ENCODE measurements at regions of chr5 and their contacts with region 1.

Region 1: GRCh38 chr5:111278845-111279504 is 54.8 kb downstream of the CAMK4 start:
- DNase-seq: peak; percentile 77 to 94 (median 86)
- ATAC-seq: peak; percentile 99
- H3K4me3 ChIP-seq: no peak overlapping the region
- H3K4me3 Mint-ChIP-seq: no peak overlapping the region
- H3K27ac ChIP-seq: no peak overlapping the region
- H3K27ac Mint-ChIP-seq: peak overlapping the region; percentile 87
- H3K4me1 ChIP-seq: peaks cover 41% of the 10 kb centered on the region
- H3K4me1 Mint-ChIP-seq: peaks cover 79% of the 10 kb centered on the region
- H3K27me3 ChIP-seq: no peaks in the 10 kb centered on the region
- H3K27me3 Mint-ChIP-seq: no peaks in the 10 kb centered on the region
- CTCF ChIP-seq: peak; percentile 86

Region 2: DNA sequence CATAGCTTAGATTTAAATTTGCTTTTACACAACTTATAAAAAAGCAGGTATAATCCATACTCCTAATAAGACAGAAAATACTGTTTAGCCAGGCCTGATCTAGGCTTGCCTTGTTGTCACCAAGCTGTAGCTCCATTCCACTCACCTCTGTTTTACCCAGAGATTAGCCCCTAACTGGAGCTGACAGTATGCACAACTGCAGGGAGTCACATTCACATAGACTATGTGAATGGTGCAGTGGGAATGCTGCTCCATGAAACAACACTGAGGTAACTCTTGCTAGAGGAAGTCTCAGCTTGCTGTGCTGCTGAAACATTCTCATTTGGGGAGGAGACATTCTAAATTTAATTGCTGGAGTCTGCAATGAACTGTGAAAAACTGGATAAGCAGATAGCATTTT is 761.6 kb before region 1 on chr5:
- CTCF ChIA-PET with region 1: no interaction called
- POLR2A ChIA-PET with region 1: no interaction called
- intact Hi-C with region 1: no loop called
- DNase-seq: no peak
- ATAC-seq: no peak
- H3K4me3 ChIP-seq: no peak overlapping the region
- H3K4me3 Mint-ChIP-seq: no peak overlapping the region
- H3K27ac ChIP-seq: no peak overlapping the region
- H3K27ac Mint-ChIP-seq: no peak overlapping the region
- H3K4me1 ChIP-seq: no peaks in the 10 kb centered on the region
- H3K4me1 Mint-ChIP-seq: no peaks in the 10 kb centered on the region
- H3K27me3 ChIP-seq: no peaks in the 10 kb centered on the region
- H3K27me3 Mint-ChIP-seq: no peaks in the 10 kb centered on the region
- CTCF ChIP-seq: no peak

Region 3: DNA sequence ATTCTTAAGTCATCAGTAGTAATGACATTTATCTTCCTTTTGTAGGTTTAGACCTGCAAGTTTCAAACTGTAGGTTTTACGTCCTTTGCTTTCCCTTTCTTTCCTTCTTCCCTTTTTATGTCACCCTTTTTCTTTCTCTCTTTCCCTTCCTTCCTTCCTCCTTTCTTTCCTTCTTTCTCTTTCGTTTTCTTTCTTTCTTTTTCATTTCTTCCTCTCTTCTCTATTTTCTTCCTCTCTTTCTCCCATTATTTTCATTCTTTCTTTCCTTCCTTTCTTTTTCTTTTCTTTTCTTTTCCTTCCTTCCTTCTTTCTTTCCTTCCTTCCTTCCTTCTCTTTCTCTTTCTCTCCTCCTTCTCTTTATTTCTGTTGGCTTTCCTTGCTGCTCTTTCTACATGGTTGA is 127.0 kb before region 1 on chr5:
- CTCF ChIA-PET with region 1: interaction called, 203 read pairs
- POLR2A ChIA-PET with region 1: interaction called, 3 read pairs
- intact Hi-C with region 1: no loop called
- DNase-seq: no peak
- ATAC-seq: no peak
- H3K4me3 ChIP-seq: no peak overlapping the region
- H3K4me3 Mint-ChIP-seq: no peak overlapping the region
- H3K27ac ChIP-seq: no peak overlapping the region
- H3K27ac Mint-ChIP-seq: no peak overlapping the region
- H3K4me1 ChIP-seq: no peaks in the 10 kb centered on the region
- H3K4me1 Mint-ChIP-seq: no peaks in the 10 kb centered on the region
- H3K27me3 ChIP-seq: no peaks in the 10 kb centered on the region
- H3K27me3 Mint-ChIP-seq: peaks cover 3% of the 10 kb centered on the region
- CTCF ChIP-seq: no peak

Region 4: DNA sequence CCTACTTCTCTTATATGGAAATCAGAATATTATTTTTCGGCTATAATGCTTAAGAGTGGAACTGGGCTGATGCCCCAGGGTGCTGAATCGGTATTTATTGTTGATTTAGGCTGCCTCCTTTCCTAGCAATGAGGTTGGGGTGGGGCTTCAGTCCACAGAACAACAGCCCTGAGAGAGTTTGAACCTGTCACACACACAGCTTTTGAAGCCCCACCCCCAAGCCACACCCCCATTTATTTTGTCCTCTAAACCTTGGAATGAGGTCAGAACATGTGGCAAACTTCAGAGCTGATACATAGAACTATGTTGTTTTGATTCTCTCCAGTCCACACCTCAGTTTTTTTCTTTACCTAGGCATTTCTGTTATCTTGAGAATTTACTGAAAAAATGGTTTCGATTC is 106.5 kb before region 1 on chr5:
- CTCF ChIA-PET with region 1: interaction called, 16 read pairs
- POLR2A ChIA-PET with region 1: interaction called, 3 read pairs
- intact Hi-C with region 1: no loop called
- DNase-seq: peak in 2 of 9 experiments; percentile 3 to 20
- ATAC-seq: no peak
- H3K4me3 ChIP-seq: no peak overlapping the region
- H3K4me3 Mint-ChIP-seq: no peak overlapping the region
- H3K27ac ChIP-seq: no peak overlapping the region
- H3K27ac Mint-ChIP-seq: no peak overlapping the region
- H3K4me1 ChIP-seq: no peaks in the 10 kb centered on the region
- H3K4me1 Mint-ChIP-seq: peaks cover 3% of the 10 kb centered on the region
- H3K27me3 ChIP-seq: no peaks in the 10 kb centered on the region
- H3K27me3 Mint-ChIP-seq: no peaks in the 10 kb centered on the region
- CTCF ChIP-seq: no peak

Region 5: GRCh38 chr5:111223889-111224563 is 54.9 kb before region 1 on chr5 and contains the start of gene CAMK4:
- CTCF ChIA-PET with region 1: interaction called, 47 read pairs
- POLR2A ChIA-PET with region 1: interaction called, 23 read pairs
- intact Hi-C with region 1: loop called (anchors 1 to 2 kb)
- DNase-seq: peak; percentile 70 to 94 (median 84)
- ATAC-seq: peak; percentile 88
- H3K4me3 ChIP-seq: peak within 1 kb of the TSS; percentile 90 to 95
- H3K4me3 Mint-ChIP-seq: peak within 1 kb of the TSS; percentile 96
- H3K27ac ChIP-seq: peak within 1 kb of the TSS; percentile 72 to 75
- H3K27ac Mint-ChIP-seq: peak within 1 kb of the TSS; percentile 99
- H3K4me1 ChIP-seq: peaks cover 24% of the 10 kb centered on the region
- H3K4me1 Mint-ChIP-seq: peaks cover 33% of the 10 kb centered on the region
- H3K27me3 ChIP-seq: no peaks in the 10 kb centered on the region
- H3K27me3 Mint-ChIP-seq: no peaks in the 10 kb centered on the region
- CTCF ChIP-seq: peak; percentile 46
- total RNA-seq, gene CAMK4: 165 to 168 TPM

Region 6: DNA sequence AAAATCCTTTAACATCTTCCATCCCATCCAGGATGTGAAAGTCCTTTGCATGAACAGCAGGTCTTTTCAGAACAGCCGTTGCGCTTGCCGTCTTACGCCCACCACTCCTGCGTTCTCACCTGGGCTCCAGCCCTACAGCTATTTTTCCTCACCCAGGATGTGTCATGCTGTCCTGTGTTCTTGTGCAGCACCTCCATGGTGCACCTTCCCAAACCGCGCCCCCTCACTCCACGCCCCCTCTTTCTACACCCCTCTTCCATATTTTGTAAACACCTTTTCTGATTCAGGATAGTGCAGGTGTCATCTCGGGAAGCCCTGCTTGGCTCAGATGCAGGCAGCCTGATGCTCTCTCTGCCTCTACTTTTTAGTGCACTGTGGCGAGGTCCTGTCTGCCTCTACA is 36.4 kb before region 1 on chr5:
- CTCF ChIA-PET with region 1: interaction called, 49 read pairs
- POLR2A ChIA-PET with region 1: no interaction called
- intact Hi-C with region 1: loop called in 1 of 2 experiments (anchors 5 kb)
- DNase-seq: no peak
- ATAC-seq: no peak
- H3K4me3 ChIP-seq: no peak overlapping the region
- H3K4me3 Mint-ChIP-seq: peak overlapping the region; percentile 1
- H3K27ac ChIP-seq: no peak overlapping the region
- H3K27ac Mint-ChIP-seq: peak overlapping the region; percentile 80
- H3K4me1 ChIP-seq: peaks cover 81% of the 10 kb centered on the region
- H3K4me1 Mint-ChIP-seq: peaks cover 89% of the 10 kb centered on the region
- H3K27me3 ChIP-seq: no peaks in the 10 kb centered on the region
- H3K27me3 Mint-ChIP-seq: no peaks in the 10 kb centered on the region
- CTCF ChIP-seq: no peak

Region 7: GRCh38 chr5:111261610-111262009 is 17.4 kb before region 1 on chr5:
- CTCF ChIA-PET with region 1: interaction called, 7 read pairs
- POLR2A ChIA-PET with region 1: interaction called, 3 read pairs
- intact Hi-C with region 1: loop called (anchors 1 to 2 kb)
- DNase-seq: no peak
- ATAC-seq: peak; percentile 57
- H3K4me3 ChIP-seq: no peak overlapping the region
- H3K4me3 Mint-ChIP-seq: no peak overlapping the region
- H3K27ac ChIP-seq: no peak overlapping the region
- H3K27ac Mint-ChIP-seq: no peak overlapping the region
- H3K4me1 ChIP-seq: peaks cover 57% of the 10 kb centered on the region
- H3K4me1 Mint-ChIP-seq: peaks cover 52% of the 10 kb centered on the region
- H3K27me3 ChIP-seq: no peaks in the 10 kb centered on the region
- H3K27me3 Mint-ChIP-seq: no peaks in the 10 kb centered on the region
- CTCF ChIP-seq: no peak

Region 8: GRCh38 chr5:112146323-112147226 is 867.6 kb after region 1 on chr5:
- CTCF ChIA-PET with region 1: interaction called, 3 read pairs
- POLR2A ChIA-PET with region 1: no interaction called
- intact Hi-C with region 1: loop called in 1 of 2 experiments (anchors 5 kb)
- DNase-seq: peak; percentile 17 to 78 (median 58)
- ATAC-seq: peak; percentile 95
- H3K4me3 ChIP-seq: no peak overlapping the region
- H3K4me3 Mint-ChIP-seq: no peak overlapping the region
- H3K27ac ChIP-seq: no peak overlapping the region
- H3K27ac Mint-ChIP-seq: no peak overlapping the region
- H3K4me1 ChIP-seq: no peaks in the 10 kb centered on the region
- H3K4me1 Mint-ChIP-seq: no peaks in the 10 kb centered on the region
- H3K27me3 ChIP-seq: no peaks in the 10 kb centered on the region
- H3K27me3 Mint-ChIP-seq: peaks cover 16% of the 10 kb centered on the region
- CTCF ChIP-seq: peak; percentile 85

Measured in CD8-positive, alpha-beta T cell (primary cell).